ENCODE measurements at regions of chr6 and their contacts with region 1.

Region 1: GRCh38 chr6:106097411-106098231 is 11.5 kb downstream of the PRDM1 start:
- DNase-seq: no peak
- ATAC-seq: peak; percentile 31 to 63 (median 57)
- H3K4me3 ChIP-seq: peak overlapping the region; percentile 3 to 63 (median 46)
- H3K27ac ChIP-seq: peak overlapping the region; percentile 59 to 96 (median 75)
- H3K4me1 ChIP-seq: peaks cover 0 to 50% (median 2%) of the 10 kb centered on the region in 12 donors
- H3K27me3 ChIP-seq: peaks cover 0 to 59% (median 0%) of the 10 kb centered on the region in 9 donors
- CTCF ChIP-seq: no peak
- POLR2A ChIP-seq: no peak

Region 2: DNA sequence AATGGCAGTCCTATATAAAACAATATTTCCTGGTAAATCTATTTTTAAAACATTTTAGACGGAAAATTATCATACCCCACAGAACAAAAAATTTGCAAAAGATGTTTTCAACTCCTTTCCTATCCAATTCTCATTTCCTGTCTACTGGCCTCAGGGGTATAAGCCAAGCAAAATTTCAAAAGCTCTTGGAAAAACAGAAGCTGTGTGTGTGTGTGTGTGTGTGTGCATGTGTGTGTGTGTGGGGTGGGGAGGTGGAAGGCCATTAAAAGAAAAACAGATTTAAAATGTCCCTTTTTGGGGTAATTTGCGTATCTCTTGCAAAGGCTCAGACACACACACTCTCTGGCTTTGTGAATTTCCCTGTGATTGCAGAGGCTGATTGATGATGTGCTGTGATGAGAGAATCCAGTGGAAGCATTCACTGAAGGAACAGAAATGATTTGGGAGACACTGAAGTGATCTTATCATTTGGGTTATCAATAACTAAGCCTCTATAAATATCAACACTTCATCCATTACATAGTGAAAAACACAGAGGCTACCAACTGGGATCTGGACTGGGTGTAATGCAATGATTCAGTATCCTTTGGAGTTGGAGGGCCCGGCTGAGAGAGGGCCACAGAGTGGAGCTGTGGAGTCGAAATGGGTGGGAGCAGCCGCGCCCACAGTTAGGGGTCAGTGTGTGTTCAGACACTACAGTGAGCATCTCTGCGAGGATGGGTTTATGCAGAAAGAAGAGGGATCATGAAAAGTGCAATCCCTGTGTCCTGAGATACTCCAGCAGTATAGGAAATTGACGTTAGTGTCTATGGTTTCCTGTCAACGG is 587.9 kb before region 1 on chr6:
- intact Hi-C with region 1: loop called in 1 of 10 experiments (anchors 10 kb)
- DNase-seq: peak in 4 of 5 donors; percentile 36 to 68 (median 52)
- ATAC-seq: peak; percentile 65 to 77 (median 76)
- H3K4me3 ChIP-seq: no peak overlapping the region
- H3K27ac ChIP-seq: peak overlapping the region in 4 of 12 donors; percentile 16 to 64 (median 46)
- H3K4me1 ChIP-seq: peaks cover 0 to 30% (median 14%) of the 10 kb centered on the region in 12 donors
- H3K27me3 ChIP-seq: no peaks in the 10 kb centered on the region
- CTCF ChIP-seq: peak in 9 of 12 donors; percentile 24 to 64 (median 38)
- POLR2A ChIP-seq: no peak

Region 3: DNA sequence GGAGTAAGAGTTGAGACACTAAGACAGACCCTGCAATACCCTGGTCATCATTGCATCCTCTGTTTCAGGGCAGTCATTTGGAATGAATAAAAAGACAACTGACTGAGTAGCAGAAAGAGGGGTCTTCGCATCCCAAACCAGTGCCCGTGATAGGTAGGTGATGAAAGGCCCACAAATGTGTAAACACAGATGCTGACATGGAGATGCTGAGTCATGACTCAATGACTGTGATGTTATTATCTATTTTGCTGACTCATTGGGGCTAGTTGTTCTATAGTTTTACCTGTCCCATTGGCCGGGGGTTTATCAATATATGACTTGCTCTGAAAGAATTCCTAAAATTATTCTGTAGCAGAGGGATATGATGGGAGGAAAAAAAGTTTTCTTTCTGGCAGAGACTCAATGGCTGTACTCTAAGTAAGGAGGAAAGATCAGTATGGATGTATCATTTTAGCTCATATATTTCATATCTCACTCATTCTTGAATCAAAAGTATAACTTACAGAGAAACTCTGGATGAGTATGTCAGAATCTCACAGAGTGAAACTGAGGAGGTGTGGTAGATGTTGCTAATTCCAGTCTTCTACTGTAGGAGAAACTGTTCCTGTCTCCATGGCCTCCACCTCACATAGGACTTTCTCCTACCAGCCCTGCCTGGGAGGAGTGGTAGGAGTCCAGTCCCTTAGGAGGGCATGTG is 574.8 kb before region 1 on chr6:
- intact Hi-C with region 1: no loop called
- DNase-seq: no peak
- ATAC-seq: no peak
- H3K4me3 ChIP-seq: no peak overlapping the region
- H3K27ac ChIP-seq: no peak overlapping the region
- H3K4me1 ChIP-seq: no peaks in the 10 kb centered on the region
- H3K27me3 ChIP-seq: peaks cover 0 to 1% (median 0%) of the 10 kb centered on the region in 9 donors
- CTCF ChIP-seq: no peak
- POLR2A ChIP-seq: no peak

Region 4: DNA sequence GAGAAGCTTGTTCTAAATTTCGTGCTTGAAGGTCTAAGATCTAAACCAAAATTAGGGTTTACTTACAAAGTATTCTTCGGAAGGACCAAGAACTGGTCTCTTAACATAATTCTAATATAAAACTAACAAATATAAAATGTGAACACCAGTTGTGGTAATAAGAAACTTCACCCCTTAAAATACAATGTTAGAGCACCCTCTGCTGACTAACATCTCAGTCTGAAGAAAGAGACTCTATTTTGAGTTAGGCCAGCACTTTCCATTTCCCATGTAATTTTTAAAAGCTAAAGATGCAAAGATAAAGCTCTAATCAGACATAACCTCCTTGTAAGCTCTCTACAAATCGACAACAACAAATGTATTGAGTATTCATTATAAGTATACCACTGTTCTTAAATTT is 203.3 kb after region 1 on chr6:
- intact Hi-C with region 1: loop called in 1 of 10 experiments (anchors 10 kb)
- DNase-seq: no peak
- ATAC-seq: no peak
- H3K4me3 ChIP-seq: no peak overlapping the region
- H3K27ac ChIP-seq: no peak overlapping the region
- H3K4me1 ChIP-seq: peaks cover 0 to 5% (median 0%) of the 10 kb centered on the region in 12 donors
- H3K27me3 ChIP-seq: no peaks in the 10 kb centered on the region
- CTCF ChIP-seq: peak in 11 of 12 donors; percentile 24 to 67 (median 51)
- POLR2A ChIP-seq: no peak

Measured in heart left ventricle (tissue), 16 donors.